CD8-positive, alpha-beta T cell (primary cell): ENCODE measurements at regions of chr4 and their contacts with region 1.

Region 1: GRCh38 chr4:15756361-15756861 is 21.7 kb upstream of the CD38 start:
- DNase-seq: peak; percentile 28 to 94 (median 71)
- ATAC-seq: peak; percentile 85
- H3K4me3 ChIP-seq: peak overlapping the region; percentile 14 to 23
- H3K4me3 Mint-ChIP-seq: peak overlapping the region; percentile 67
- H3K27ac ChIP-seq: peak overlapping the region; percentile 27 to 63
- H3K27ac Mint-ChIP-seq: peak overlapping the region; percentile 84
- H3K4me1 ChIP-seq: peaks cover 43% of the 10 kb centered on the region
- H3K4me1 Mint-ChIP-seq: peaks cover 50% of the 10 kb centered on the region
- H3K27me3 ChIP-seq: no peaks in the 10 kb centered on the region
- H3K27me3 Mint-ChIP-seq: no peaks in the 10 kb centered on the region
- CTCF ChIP-seq: peak; percentile 77

Region 2: GRCh38 chr4:14711259-14711658 is 1045.2 kb before region 1 on chr4:
- CTCF ChIA-PET with region 1: no interaction called
- POLR2A ChIA-PET with region 1: no interaction called
- intact Hi-C with region 1: no loop called
- DNase-seq: no peak
- ATAC-seq: no peak
- H3K4me3 ChIP-seq: no peak overlapping the region
- H3K4me3 Mint-ChIP-seq: no peak overlapping the region
- H3K27ac ChIP-seq: no peak overlapping the region
- H3K27ac Mint-ChIP-seq: no peak overlapping the region
- H3K4me1 ChIP-seq: no peaks in the 10 kb centered on the region
- H3K4me1 Mint-ChIP-seq: no peaks in the 10 kb centered on the region
- H3K27me3 ChIP-seq: no peaks in the 10 kb centered on the region
- H3K27me3 Mint-ChIP-seq: peaks cover 2% of the 10 kb centered on the region
- CTCF ChIP-seq: no peak

Region 3: DNA sequence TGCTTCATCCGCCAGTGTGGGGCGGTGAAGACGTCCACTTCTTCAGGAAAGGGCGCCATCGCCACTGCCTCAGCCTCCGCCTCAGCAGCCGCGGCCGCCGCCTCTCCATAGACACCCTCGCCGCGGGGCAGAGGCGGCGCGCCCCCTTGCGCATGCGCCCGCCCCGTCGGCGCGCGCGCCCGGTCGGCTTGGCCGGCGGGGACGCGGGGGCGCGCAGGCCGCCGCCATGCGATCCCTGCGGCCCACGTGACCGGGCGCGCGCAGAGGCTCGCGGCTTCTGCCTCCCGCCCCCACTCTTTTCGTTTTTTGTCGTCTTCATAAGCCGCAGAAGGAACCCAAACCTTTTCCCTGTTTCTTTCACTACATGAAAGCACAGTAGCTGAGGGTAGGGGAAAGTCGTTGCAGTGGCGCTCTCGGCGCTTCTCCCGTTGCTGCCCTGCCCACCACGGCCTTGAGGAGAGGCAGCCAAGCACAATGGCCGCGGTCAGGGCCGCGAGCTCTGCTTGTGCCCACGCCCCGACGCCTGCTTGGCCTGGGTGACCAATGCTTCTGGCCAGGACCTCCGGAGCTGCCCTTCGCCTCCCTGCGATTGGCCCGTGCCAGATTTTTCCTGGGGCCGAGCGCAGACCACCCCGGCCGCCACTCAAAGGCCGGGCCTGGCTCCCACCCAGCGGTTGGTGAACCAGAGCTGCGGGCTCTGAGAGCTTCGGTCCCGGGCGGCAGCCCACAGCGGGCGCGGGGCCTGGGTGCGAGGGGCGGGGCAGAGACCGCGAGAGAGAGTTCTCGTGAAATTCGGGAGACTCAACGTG is 101.0 kb before region 1 on chr4 and contains the start of gene FBXL5:
- CTCF ChIA-PET with region 1: no interaction called
- POLR2A ChIA-PET with region 1: no interaction called
- intact Hi-C with region 1: loop called (anchors 1 to 10 kb)
- DNase-seq: peak; percentile 66 to 95 (median 80)
- ATAC-seq: peak; percentile 79
- H3K4me3 ChIP-seq: peak within 1 kb of the TSS; percentile 67 to 85
- H3K4me3 Mint-ChIP-seq: peak within 1 kb of the TSS; percentile 98
- H3K27ac ChIP-seq: peak within 1 kb of the TSS; percentile 88 to 92
- H3K27ac Mint-ChIP-seq: peak within 1 kb of the TSS; percentile 97
- H3K4me1 ChIP-seq: peaks cover 51% of the 10 kb centered on the region
- H3K4me1 Mint-ChIP-seq: peaks cover 46% of the 10 kb centered on the region
- H3K27me3 ChIP-seq: no peaks in the 10 kb centered on the region
- H3K27me3 Mint-ChIP-seq: no peaks in the 10 kb centered on the region
- CTCF ChIP-seq: no peak
- total RNA-seq, gene FBXL5: 60.4 to 61.7 TPM

Region 4: GRCh38 chr4:15681207-15682015 is 75.0 kb before region 1 on chr4 and contains the start of gene FAM200B:
- CTCF ChIA-PET with region 1: interaction called, 6 read pairs
- POLR2A ChIA-PET with region 1: no interaction called
- intact Hi-C with region 1: loop called (anchors 1 to 5 kb)
- DNase-seq: peak; percentile 92 to 98 (median 95)
- ATAC-seq: peak; percentile 96
- H3K4me3 ChIP-seq: peak within 1 kb of the TSS; percentile 82 to 87
- H3K4me3 Mint-ChIP-seq: peak within 1 kb of the TSS; percentile 93
- H3K27ac ChIP-seq: peak within 1 kb of the TSS; percentile 80 to 85
- H3K27ac Mint-ChIP-seq: peak within 1 kb of the TSS; percentile 97
- H3K4me1 ChIP-seq: peaks cover 18% of the 10 kb centered on the region
- H3K4me1 Mint-ChIP-seq: peaks cover 38% of the 10 kb centered on the region
- H3K27me3 ChIP-seq: no peaks in the 10 kb centered on the region
- H3K27me3 Mint-ChIP-seq: no peaks in the 10 kb centered on the region
- CTCF ChIP-seq: no peak
- total RNA-seq, gene FAM200B: 14.8 to 17.1 TPM

Region 5: GRCh38 chr4:15729910-15730533 is 26.4 kb before region 1 on chr4:
- CTCF ChIA-PET with region 1: interaction called, 8 read pairs
- POLR2A ChIA-PET with region 1: interaction called, 3 read pairs
- intact Hi-C with region 1: loop called (anchors 1 kb)
- DNase-seq: peak in 6 of 9 experiments; percentile 10 to 71 (median 28)
- ATAC-seq: peak; percentile 70
- H3K4me3 ChIP-seq: no peak overlapping the region
- H3K4me3 Mint-ChIP-seq: no peak overlapping the region
- H3K27ac ChIP-seq: no peak overlapping the region
- H3K27ac Mint-ChIP-seq: no peak overlapping the region
- H3K4me1 ChIP-seq: no peaks in the 10 kb centered on the region
- H3K4me1 Mint-ChIP-seq: peaks cover 20% of the 10 kb centered on the region
- H3K27me3 ChIP-seq: no peaks in the 10 kb centered on the region
- H3K27me3 Mint-ChIP-seq: peaks cover 2% of the 10 kb centered on the region
- CTCF ChIP-seq: peak; percentile 100

Region 6: GRCh38 chr4:15778289-15779241 is 22.2 kb after region 1 on chr4 and contains the start of gene CD38:
- CTCF ChIA-PET with region 1: interaction called, 14 read pairs
- POLR2A ChIA-PET with region 1: interaction called, 6 read pairs
- intact Hi-C with region 1: loop called (anchors 1 kb)
- DNase-seq: peak; percentile 16 to 65 (median 52)
- ATAC-seq: peak; percentile 49
- H3K4me3 ChIP-seq: peak within 1 kb of the TSS; percentile 57 to 74
- H3K4me3 Mint-ChIP-seq: peak within 1 kb of the TSS; percentile 85
- H3K27ac ChIP-seq: peak within 1 kb of the TSS in 1 of 2 experiments; percentile 32
- H3K27ac Mint-ChIP-seq: peak within 1 kb of the TSS; percentile 68
- H3K4me1 ChIP-seq: peaks cover 29% of the 10 kb centered on the region
- H3K4me1 Mint-ChIP-seq: peaks cover 56% of the 10 kb centered on the region
- H3K27me3 ChIP-seq: no peaks in the 10 kb centered on the region
- H3K27me3 Mint-ChIP-seq: no peaks in the 10 kb centered on the region
- CTCF ChIP-seq: no peak
- total RNA-seq, gene CD38: 3.5 to 6.2 TPM

Region 7: GRCh38 chr4:16573744-16574143 is 817.3 kb after region 1 on chr4:
- CTCF ChIA-PET with region 1: no interaction called
- POLR2A ChIA-PET with region 1: no interaction called
- intact Hi-C with region 1: no loop called
- DNase-seq: no peak
- ATAC-seq: no peak
- H3K4me3 ChIP-seq: no peak overlapping the region
- H3K4me3 Mint-ChIP-seq: no peak overlapping the region
- H3K27ac ChIP-seq: no peak overlapping the region
- H3K27ac Mint-ChIP-seq: no peak overlapping the region
- H3K4me1 ChIP-seq: no peaks in the 10 kb centered on the region
- H3K4me1 Mint-ChIP-seq: no peaks in the 10 kb centered on the region
- H3K27me3 ChIP-seq: no peaks in the 10 kb centered on the region
- H3K27me3 Mint-ChIP-seq: peaks cover 4% of the 10 kb centered on the region
- CTCF ChIP-seq: no peak